Activated CD8-positive, alpha-beta T cell treated with anti-CD3 and anti-CD28 coated beads for 36 hours (primary cell): ENCODE measurements at regions of chr11 and their contacts with region 1.

Region 1: GRCh38 chr11:72683782-72684200 is 9.6 kb upstream of the PDE2A start:
- DNase-seq: peak; percentile 85
- ATAC-seq: peak; percentile 74
- H3K4me3 Mint-ChIP-seq: no peak overlapping the region
- H3K27ac Mint-ChIP-seq: no peak overlapping the region
- H3K4me1 Mint-ChIP-seq: peaks cover 23% of the 10 kb centered on the region
- H3K27me3 Mint-ChIP-seq: no peaks in the 10 kb centered on the region
- CTCF ChIP-seq: peak; percentile 90

Region 2: DNA sequence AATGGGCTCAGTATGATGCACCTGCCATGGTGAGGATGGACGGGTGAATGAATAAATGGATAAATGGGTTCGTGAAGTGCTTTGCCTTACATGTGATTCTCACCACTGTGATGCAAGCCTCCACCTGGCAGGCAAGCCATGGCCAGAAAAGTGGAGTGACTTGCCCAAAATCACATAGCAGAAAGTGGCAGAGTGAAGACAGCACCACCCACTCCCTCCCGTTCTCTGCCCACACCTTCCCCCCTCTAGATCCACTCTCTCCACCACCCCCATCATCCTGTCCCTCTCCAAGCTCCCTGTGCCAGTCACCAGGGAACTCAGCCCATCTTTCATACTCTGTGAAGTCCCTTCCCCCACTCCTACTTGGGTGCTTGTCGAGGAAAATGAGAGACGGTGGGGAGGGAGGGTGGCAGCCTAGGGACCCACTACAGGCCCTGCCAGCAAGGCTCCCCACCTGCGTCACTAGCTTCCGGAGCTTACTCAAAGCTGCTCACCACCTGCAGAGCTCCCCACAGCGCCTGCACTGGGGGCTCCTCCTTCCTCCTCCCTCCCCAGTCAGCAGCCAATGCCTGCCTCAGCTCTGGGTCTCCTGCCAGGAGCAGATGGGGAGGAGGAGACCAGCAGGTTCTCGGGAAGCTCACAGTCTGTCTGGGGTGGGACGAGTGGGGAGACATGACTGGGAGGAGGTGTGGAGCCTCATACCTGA is 91.9 kb before region 1 on chr11:
- CTCF ChIA-PET with region 1: interaction called, 109 read pairs
- POLR2A ChIA-PET with region 1: interaction called, 3 read pairs
- intact Hi-C with region 1: loop called (anchors 5 kb)
- DNase-seq: peak; percentile 88
- ATAC-seq: peak; percentile 97
- H3K4me3 Mint-ChIP-seq: no peak overlapping the region
- H3K27ac Mint-ChIP-seq: peak overlapping the region; percentile 69
- H3K4me1 Mint-ChIP-seq: peaks cover 31% of the 10 kb centered on the region
- H3K27me3 Mint-ChIP-seq: peaks cover 36% of the 10 kb centered on the region
- CTCF ChIP-seq: no peak

Region 3: DNA sequence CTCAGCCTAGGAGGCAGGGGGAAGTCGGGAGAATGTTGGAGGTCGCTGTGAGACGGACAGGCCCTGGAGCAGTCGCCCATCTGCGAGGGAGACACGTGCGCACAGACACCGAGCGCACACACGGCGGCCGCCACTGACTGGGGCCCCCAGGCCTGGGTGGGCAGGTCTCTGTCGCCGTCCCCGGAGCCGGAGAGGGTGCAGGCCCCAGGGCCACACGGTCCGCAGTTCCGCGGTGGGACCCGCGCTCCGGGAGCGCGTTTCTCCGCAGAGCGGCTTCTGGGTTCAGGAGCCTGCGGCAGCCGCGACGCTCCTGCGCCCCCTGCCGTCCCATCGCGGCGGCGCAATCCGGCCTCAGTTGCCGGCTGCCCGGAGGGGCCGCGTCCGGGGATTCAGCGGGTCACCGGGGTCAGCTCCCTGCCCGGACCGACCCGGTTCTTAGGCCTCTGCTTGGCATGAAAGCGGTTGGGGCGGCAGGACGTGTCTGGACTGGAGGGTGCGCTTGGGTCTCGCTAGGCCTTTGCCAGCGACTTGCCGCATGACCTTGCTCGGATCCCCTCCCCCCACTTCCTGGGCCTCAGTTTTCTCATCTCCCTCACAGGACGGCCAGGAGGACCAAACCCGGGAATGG is 40.8 kb before region 1 on chr11:
- CTCF ChIA-PET with region 1: interaction called, 10 read pairs
- POLR2A ChIA-PET with region 1: no interaction called
- intact Hi-C with region 1: no loop called
- DNase-seq: peak; percentile 70
- ATAC-seq: peak; percentile 90
- H3K4me3 Mint-ChIP-seq: peak overlapping the region; percentile 57
- H3K27ac Mint-ChIP-seq: no peak overlapping the region
- H3K4me1 Mint-ChIP-seq: no peaks in the 10 kb centered on the region
- H3K27me3 Mint-ChIP-seq: no peaks in the 10 kb centered on the region
- CTCF ChIP-seq: peak; percentile 100

Region 4: DNA sequence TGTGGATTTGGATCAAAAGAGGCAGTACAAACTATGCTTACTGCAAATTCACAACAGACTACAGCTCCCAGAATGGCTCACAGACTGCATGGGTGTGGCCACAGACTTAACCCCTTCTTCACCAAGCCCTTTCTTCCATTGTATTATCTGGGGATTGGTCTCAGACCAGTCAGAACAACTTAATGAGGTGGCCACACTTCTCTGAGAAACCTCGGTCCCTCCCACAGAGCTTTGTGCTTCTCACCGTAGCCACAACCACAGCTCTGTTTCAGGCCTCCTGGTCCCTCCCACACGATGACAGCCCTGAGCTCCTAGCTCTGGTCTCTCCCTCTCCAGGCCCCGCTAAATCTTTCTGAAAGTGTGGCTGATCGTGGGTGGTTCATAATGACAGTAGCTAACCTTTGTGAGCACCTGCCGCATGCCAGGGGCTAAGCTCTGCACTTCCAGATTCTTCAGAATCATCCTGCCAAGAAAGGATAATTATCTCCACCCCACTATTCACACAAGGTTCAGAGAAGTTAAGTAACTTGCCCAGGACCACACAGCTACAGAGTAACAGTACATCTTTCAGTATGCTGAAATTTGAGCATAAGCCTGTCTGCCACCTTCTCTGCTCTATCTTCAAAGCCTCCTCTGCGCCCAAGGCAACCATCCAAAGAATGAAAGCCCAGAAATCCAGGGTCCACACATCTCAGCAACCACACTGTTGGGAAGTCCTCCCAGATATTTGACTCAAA is 15.0 kb before region 1 on chr11:
- CTCF ChIA-PET with region 1: interaction called, 20 read pairs
- POLR2A ChIA-PET with region 1: interaction called, 16 read pairs
- intact Hi-C with region 1: no loop called
- DNase-seq: peak; percentile 91
- ATAC-seq: peak; percentile 95
- H3K4me3 Mint-ChIP-seq: no peak overlapping the region
- H3K27ac Mint-ChIP-seq: no peak overlapping the region
- H3K4me1 Mint-ChIP-seq: peaks cover 14% of the 10 kb centered on the region
- H3K27me3 Mint-ChIP-seq: peaks cover 48% of the 10 kb centered on the region
- CTCF ChIP-seq: no peak